ENCODE measurements at regions of chr9 and their contacts with region 1.

Region 1: DNA sequence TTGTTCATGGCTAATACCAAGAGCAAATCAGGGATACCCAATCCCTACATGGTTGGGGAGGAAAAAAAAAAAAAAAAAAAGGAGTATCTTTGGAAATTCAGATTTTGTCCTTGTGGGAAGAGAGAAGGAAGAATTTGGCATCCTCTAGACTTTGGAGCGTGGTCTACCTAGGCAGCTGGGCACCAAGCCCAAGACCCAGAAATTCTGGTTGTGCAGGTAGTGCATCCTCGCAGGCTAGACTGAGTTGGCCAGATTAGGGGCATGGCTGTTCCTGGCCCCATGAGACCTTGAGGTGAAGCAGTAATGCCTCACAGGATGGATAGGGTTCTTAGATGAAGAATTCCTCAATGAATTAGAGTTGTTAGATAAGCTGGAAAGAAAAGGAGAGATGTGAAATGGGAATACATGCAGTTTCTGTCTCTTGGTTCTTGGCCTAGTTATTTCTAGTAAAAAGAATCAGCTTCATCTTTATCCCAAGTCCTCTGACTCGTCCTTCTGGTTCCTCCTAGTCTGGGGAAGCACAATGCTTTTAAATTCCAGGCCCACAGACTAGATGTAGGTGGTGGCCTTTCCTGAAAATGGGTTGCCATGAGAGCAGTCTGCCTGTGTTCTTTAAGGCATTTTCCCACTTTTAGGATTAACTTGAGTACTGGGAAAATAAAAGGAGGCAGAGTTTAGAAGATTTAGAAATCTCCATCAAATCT is 140.5 kb upstream of the RUSC2 start:
- DNase-seq: peak; percentile 64
- ATAC-seq: no peak
- H3K4me3 ChIP-seq: no peak overlapping the region
- H3K27ac ChIP-seq: no peak overlapping the region; the same call in 1 of the 2 replicates
- H3K4me1 ChIP-seq: peaks cover 24% of the 10 kb centered on the region
- H3K27me3 ChIP-seq: no peaks in the 10 kb centered on the region
- CTCF ChIP-seq: no peak

Region 2: GRCh38 chr9:35367451-35367850 is 18.0 kb after region 1 on chr9:
- CTCF ChIA-PET with region 1: no interaction called
- POLR2A ChIA-PET with region 1: interaction called, 17 read pairs
- intact Hi-C with region 1: no loop called
- DNase-seq: peak; percentile 87
- ATAC-seq: peak; percentile 99
- H3K4me3 ChIP-seq: no peak overlapping the region
- H3K27ac ChIP-seq: peak overlapping the region; percentile 25
- H3K4me1 ChIP-seq: peaks cover 27% of the 10 kb centered on the region
- H3K27me3 ChIP-seq: no peaks in the 10 kb centered on the region
- CTCF ChIP-seq: no peak